Activated CD8-positive, alpha-beta T cell treated with anti-CD3 and anti-CD28 coated beads for 36 hours (primary cell): ENCODE measurements at regions of chr22 and their contacts with region 1.

Region 1: GRCh38 chr22:27232077-27232476 is 569.5 kb downstream of the MN1 start:
- DNase-seq: no peak
- ATAC-seq: no peak
- H3K4me3 Mint-ChIP-seq: no peak overlapping the region
- H3K27ac Mint-ChIP-seq: no peak overlapping the region
- H3K4me1 Mint-ChIP-seq: no peaks in the 10 kb centered on the region
- H3K27me3 Mint-ChIP-seq: peaks cover 12% of the 10 kb centered on the region
- CTCF ChIP-seq: no peak

Region 2: DNA sequence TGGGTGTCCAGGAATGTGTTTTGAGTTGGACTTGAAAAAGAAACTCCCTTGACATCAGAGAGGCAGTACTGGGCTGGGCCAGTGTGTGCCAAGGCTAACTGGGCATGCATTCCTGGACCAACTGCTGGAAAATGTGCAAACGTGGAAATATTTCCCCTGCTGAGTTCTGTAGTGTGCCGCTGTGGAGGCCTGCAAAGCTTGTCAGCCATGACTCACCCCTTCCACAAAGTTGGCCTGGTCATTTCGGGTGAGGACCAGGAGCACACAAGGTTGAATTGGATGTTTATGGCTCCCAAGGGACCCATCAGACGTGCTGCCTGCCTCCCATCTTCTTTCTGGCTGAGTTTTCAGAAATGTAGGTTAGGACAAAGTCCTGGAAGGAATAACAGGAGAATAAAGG is 61.6 kb before region 1 on chr22:
- CTCF ChIA-PET with region 1: no interaction called
- POLR2A ChIA-PET with region 1: no interaction called
- intact Hi-C with region 1: no loop called
- DNase-seq: no peak
- ATAC-seq: no peak
- H3K4me3 Mint-ChIP-seq: no peak overlapping the region
- H3K27ac Mint-ChIP-seq: no peak overlapping the region
- H3K4me1 Mint-ChIP-seq: no peaks in the 10 kb centered on the region
- H3K27me3 Mint-ChIP-seq: peaks cover 14% of the 10 kb centered on the region
- CTCF ChIP-seq: no peak

Region 3: GRCh38 chr22:27246558-27246957 is 14.5 kb after region 1 on chr22:
- CTCF ChIA-PET with region 1: no interaction called
- POLR2A ChIA-PET with region 1: no interaction called
- intact Hi-C with region 1: loop called (anchors 1 kb)
- DNase-seq: no peak
- ATAC-seq: no peak
- H3K4me3 Mint-ChIP-seq: no peak overlapping the region
- H3K27ac Mint-ChIP-seq: no peak overlapping the region
- H3K4me1 Mint-ChIP-seq: peaks cover 14% of the 10 kb centered on the region
- H3K27me3 Mint-ChIP-seq: no peaks in the 10 kb centered on the region
- CTCF ChIP-seq: no peak